Activated CD4-positive, alpha-beta T cell treated with anti-CD3 and anti-CD28 coated beads for 36 hours (primary cell): ENCODE measurements at regions of chr12 and their contacts with region 1.

Region 1: GRCh38 chr12:68451261-68452077 is 119.3 kb upstream of the MDM1 start:
- DNase-seq: peak; percentile 67
- ATAC-seq: peak; percentile 80
- H3K4me3 Mint-ChIP-seq: peak overlapping the region; percentile 46
- H3K27ac Mint-ChIP-seq: peak overlapping the region; percentile 93
- H3K4me1 Mint-ChIP-seq: peaks cover 87% of the 10 kb centered on the region
- H3K27me3 Mint-ChIP-seq: no peaks in the 10 kb centered on the region

Region 2: DNA sequence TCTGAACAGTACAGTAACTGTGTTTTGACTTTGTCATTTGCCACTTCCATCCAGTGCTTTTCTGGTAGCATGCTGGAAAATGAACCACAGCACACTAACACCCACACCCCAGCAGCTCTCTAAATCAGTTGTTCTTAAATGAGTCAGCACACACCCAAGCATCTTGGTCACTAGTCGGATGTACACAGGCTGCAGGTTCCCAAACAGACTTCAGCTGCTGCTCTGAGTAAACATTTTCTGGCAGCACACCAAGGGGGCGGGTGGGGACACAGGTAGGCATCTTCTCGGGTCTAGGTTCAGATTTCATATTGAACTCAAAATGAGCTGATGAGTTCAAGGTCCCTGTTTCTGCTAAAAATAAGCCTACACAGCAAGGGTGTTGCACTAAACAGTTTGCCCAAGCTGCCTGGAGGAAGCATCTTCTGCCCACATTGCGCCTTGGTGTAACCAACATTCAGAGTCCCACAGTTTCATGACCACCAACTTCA is 331.7 kb before region 1 on chr12:
- CTCF ChIA-PET with region 1: no interaction called
- POLR2A ChIA-PET with region 1: no interaction called
- intact Hi-C with region 1: loop called in 1 of 2 experiments (anchors 5 kb)
- DNase-seq: peak; percentile 84
- ATAC-seq: peak; percentile 82
- H3K4me3 Mint-ChIP-seq: no peak overlapping the region
- H3K27ac Mint-ChIP-seq: peak overlapping the region; percentile 48
- H3K4me1 Mint-ChIP-seq: peaks cover 20% of the 10 kb centered on the region
- H3K27me3 Mint-ChIP-seq: peaks cover 3% of the 10 kb centered on the region

Region 3: DNA sequence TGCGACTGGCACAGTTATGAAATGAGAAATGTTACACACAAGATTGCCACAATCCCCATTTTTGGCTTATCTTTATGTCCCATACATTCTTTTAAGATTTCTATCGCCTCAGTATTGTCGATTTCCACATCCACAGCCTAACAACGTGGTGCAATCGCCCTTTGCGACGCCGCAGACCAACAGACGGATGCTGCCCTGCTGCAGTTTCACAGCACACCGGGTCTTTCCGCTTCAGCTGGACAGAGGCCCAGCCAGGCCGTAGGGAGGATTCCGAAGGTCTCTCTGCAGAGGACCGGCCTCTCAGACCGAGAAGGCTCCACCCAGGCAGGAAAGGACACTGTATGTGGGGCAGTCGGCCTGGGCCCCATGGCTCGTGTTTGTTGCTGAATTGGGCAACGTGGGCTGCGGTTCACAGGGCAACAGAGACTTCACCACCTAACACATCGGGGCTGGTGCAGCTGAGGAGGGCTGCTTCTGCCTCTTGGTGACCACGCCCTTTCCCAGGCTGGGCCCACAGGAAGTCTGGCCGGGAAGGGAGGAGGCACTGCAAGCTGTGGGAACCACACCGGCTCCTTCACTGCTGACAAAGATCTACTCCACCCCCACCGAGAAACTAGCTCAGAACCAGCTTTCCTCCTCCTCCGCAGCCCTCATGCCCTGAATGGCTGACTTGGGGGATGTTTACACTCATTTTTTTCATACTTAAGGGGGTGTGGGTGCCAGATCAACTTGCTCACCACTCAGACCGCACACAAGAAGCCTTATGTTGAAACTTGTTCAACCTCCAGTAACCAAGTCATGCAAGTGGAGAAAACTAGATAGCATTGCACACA is 86.4 kb before region 1 on chr12:
- CTCF ChIA-PET with region 1: interaction called, 11 read pairs
- POLR2A ChIA-PET with region 1: no interaction called
- intact Hi-C with region 1: loop called (anchors 1 to 2 kb)
- DNase-seq: peak; percentile 91
- ATAC-seq: peak; percentile 92
- H3K4me3 Mint-ChIP-seq: peak overlapping the region; percentile 74
- H3K27ac Mint-ChIP-seq: peak overlapping the region; percentile 96
- H3K4me1 Mint-ChIP-seq: peaks cover 64% of the 10 kb centered on the region
- H3K27me3 Mint-ChIP-seq: no peaks in the 10 kb centered on the region

Region 4: GRCh38 chr12:68497702-68498101 is 46.2 kb after region 1 on chr12:
- CTCF ChIA-PET with region 1: interaction called, 4 read pairs
- POLR2A ChIA-PET with region 1: no interaction called
- intact Hi-C with region 1: loop called (anchors 1 kb)
- DNase-seq: peak; percentile 27
- ATAC-seq: peak; percentile 78
- H3K4me3 Mint-ChIP-seq: peak overlapping the region; percentile 53
- H3K27ac Mint-ChIP-seq: peak overlapping the region; percentile 86
- H3K4me1 Mint-ChIP-seq: peaks cover 37% of the 10 kb centered on the region
- H3K27me3 Mint-ChIP-seq: peaks cover 2% of the 10 kb centered on the region

Region 5: DNA sequence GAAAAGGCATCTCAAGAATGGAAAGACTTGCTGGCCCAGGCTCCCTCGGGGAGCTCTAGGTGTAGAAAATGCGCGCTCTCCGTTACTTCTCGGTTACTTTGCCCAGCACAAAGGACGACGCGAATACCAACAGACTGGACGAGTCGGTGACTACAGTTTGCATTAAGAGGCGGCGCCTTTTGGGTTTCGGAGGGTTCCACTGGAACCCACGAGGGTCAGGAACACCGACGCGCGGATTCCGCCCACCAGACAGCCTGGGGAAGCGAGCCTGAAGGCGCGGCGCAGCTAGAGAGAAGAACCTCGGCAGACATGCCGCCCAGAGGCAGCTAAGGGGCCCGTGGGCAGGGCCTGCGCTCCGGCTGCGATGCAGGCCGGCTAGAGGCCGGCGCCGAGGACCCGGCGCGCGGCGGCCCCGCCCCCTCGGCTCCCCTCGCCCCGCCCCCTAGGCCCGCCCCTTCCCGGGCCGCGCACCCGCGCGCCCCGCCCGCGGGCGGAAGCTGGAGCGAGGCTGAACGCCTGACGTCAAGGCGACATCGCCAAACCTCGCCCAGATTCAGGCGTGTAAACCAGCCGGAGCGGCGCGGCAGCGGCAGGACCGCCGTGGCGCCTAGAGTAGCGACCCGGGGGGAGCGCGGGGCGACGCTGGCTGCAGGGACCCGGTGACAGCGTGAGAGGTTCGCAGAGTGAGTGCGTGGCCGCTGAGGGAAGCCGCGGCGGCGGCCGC is 159.1 kb after region 1 on chr12 and contains the start of gene RAP1B:
- CTCF ChIA-PET with region 1: interaction called, 5 read pairs
- POLR2A ChIA-PET with region 1: interaction called, 5 read pairs
- intact Hi-C with region 1: loop called (anchors 1 kb)
- DNase-seq: peak; percentile 94
- ATAC-seq: peak; percentile 76
- H3K4me3 Mint-ChIP-seq: peak within 1 kb of the TSS; percentile 86
- H3K27ac Mint-ChIP-seq: peak within 1 kb of the TSS; percentile 94
- H3K4me1 Mint-ChIP-seq: peaks cover 39% of the 10 kb centered on the region
- H3K27me3 Mint-ChIP-seq: no peaks in the 10 kb centered on the region
- total RNA-seq, gene RAP1B: 174 to 242 TPM

Region 6: GRCh38 chr12:68745904-68746571 is 294.6 kb after region 1 on chr12 and contains the start of gene SLC35E3:
- CTCF ChIA-PET with region 1: no interaction called
- POLR2A ChIA-PET with region 1: no interaction called
- intact Hi-C with region 1: loop called in 1 of 2 experiments (anchors 1 kb)
- DNase-seq: peak; percentile 96
- ATAC-seq: peak; percentile 97
- H3K4me3 Mint-ChIP-seq: peak within 1 kb of the TSS; percentile 87
- H3K27ac Mint-ChIP-seq: peak within 1 kb of the TSS; percentile 92
- H3K4me1 Mint-ChIP-seq: peaks cover 16% of the 10 kb centered on the region
- H3K27me3 Mint-ChIP-seq: no peaks in the 10 kb centered on the region
- total RNA-seq, gene SLC35E3: 3.5 to 5.1 TPM

Region 7: DNA sequence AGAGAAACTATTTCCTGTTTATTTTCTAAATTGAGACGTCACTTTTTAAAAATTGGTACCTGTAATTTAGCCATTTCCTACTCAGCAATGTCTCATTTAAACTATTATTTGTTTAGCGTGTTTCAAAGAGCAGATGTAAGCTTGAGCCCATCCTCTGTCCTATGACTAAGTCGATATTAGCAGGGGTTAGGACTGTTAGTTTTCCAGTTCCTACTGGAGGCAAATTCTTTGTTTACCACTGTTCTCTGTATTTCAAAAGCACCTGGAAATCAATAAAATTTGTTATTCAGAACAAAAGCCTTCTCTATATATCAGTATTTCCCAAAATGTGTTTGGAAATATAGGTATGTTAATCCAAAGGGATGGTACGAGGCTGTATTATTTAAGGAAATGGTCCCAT is 398.9 kb after region 1 on chr12:
- CTCF ChIA-PET with region 1: no interaction called
- POLR2A ChIA-PET with region 1: no interaction called
- intact Hi-C with region 1: no loop called
- DNase-seq: no peak
- ATAC-seq: no peak
- H3K4me3 Mint-ChIP-seq: no peak overlapping the region
- H3K27ac Mint-ChIP-seq: no peak overlapping the region
- H3K4me1 Mint-ChIP-seq: peaks cover 4% of the 10 kb centered on the region
- H3K27me3 Mint-ChIP-seq: no peaks in the 10 kb centered on the region